ENCODE measurements at regions of chr5 and their contacts with region 1.

Region 1: DNA sequence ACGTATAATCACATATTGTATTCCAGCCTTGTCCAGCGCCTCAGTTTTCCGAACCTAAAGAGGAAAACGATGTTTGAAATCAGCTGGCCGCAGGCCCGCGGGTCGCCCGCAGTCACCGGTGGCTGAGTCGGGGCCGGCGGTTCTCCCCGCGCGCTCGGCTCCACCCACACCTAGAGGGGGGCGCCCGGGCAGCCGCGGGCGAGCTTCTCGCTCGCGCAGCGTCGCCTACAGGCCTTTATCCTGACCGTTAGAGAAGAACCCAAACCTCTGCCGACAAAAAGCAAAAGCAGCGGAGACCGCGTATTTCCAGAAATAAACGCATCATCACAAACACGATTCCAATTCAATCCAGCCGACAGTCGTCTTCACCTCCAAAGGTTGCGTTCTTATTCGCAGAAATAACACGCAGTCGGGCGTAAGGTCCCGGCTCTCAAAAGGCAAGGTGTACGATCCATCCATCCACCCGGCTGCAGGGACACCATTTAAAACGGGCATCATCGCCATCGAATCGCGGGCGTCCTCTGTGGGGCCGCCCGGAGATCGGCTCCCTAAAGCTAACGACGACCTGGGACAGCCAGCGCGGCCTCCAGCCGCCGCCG is 680 bp upstream of the NIPBL start:
- DNase-seq: peak; percentile 81
- ATAC-seq: peak; percentile 67
- H3K4me3 ChIP-seq: peak overlapping the region; percentile 87
- H3K27ac ChIP-seq: peak overlapping the region; percentile 67
- H3K4me1 ChIP-seq: peaks cover 37% of the 10 kb centered on the region
- H3K27me3 ChIP-seq: no peaks in the 10 kb centered on the region
- CTCF ChIP-seq: peak; percentile 60

Region 2: DNA sequence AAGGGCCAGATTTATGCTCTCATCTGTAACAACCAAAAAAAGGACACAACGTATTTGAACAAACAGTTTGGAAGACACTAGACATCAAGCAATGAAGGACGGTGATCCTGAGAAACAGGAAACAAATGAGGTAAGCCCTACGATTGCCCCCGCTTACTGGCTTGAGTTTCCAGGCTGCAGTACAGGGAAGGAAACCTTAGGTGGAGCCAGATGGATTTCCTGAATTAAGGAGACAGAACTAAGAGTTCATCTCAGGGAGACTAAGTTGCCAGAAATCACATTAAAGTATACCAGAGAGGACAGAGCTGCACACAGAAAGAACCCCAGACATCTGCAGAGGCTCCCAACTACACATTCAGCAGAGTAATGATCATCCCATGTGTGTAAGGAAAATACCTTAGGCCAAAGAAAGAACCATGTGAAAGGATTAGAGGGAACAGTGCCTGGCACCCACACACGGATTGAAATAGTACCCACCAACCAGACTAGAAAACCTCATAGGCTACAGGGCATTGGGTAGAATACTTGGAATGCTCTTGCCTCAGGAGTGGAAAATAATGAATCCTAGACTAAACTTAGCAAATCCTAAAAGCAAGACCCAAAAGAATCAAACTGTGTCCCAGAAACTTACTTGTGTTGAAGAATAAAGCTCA is 98.7 kb before region 1 on chr5:
- CTCF ChIA-PET with region 1: no interaction called
- POLR2A ChIA-PET with region 1: no interaction called
- intact Hi-C with region 1: no loop called
- DNase-seq: peak; percentile 49
- ATAC-seq: peak; percentile 31; the same call in 1 of the 2 replicates
- H3K4me3 ChIP-seq: no peak overlapping the region
- H3K27ac ChIP-seq: no peak overlapping the region
- H3K4me1 ChIP-seq: no peaks in the 10 kb centered on the region
- H3K27me3 ChIP-seq: no peaks in the 10 kb centered on the region
- CTCF ChIP-seq: peak; percentile 48

Region 3: GRCh38 chr5:36928947-36929346 is 53.1 kb after region 1 on chr5:
- CTCF ChIA-PET with region 1: interaction called, 4 read pairs
- POLR2A ChIA-PET with region 1: no interaction called
- intact Hi-C with region 1: loop called (anchors 2 kb)
- DNase-seq: peak; percentile 95
- ATAC-seq: peak; percentile 96
- H3K4me3 ChIP-seq: no peak overlapping the region
- H3K27ac ChIP-seq: peak overlapping the region; percentile 80
- H3K4me1 ChIP-seq: peaks cover 47% of the 10 kb centered on the region
- H3K27me3 ChIP-seq: no peaks in the 10 kb centered on the region
- CTCF ChIP-seq: no peak

Region 4: GRCh38 chr5:37005946-37006540 is 130.2 kb after region 1 on chr5:
- CTCF ChIA-PET with region 1: interaction called, 12 read pairs
- POLR2A ChIA-PET with region 1: no interaction called
- intact Hi-C with region 1: loop called (anchors 2 kb)
- DNase-seq: peak; percentile 62
- ATAC-seq: peak; percentile 45; the same call in 1 of the 2 replicates
- H3K4me3 ChIP-seq: no peak overlapping the region
- H3K27ac ChIP-seq: no peak overlapping the region
- H3K4me1 ChIP-seq: no peaks in the 10 kb centered on the region
- H3K27me3 ChIP-seq: no peaks in the 10 kb centered on the region
- CTCF ChIP-seq: peak; percentile 84

Region 5: GRCh38 chr5:37722236-37723146 is 846.6 kb after region 1 on chr5:
- CTCF ChIA-PET with region 1: no interaction called
- POLR2A ChIA-PET with region 1: no interaction called
- intact Hi-C with region 1: loop called (anchors 5 kb)
- DNase-seq: peak; percentile 96
- ATAC-seq: peak; percentile 92
- H3K4me3 ChIP-seq: no peak overlapping the region
- H3K27ac ChIP-seq: peak overlapping the region; percentile 53
- H3K4me1 ChIP-seq: peaks cover 41% of the 10 kb centered on the region
- H3K27me3 ChIP-seq: no peaks in the 10 kb centered on the region
- CTCF ChIP-seq: no peak

Measured in PC-3 (cell line).